Mammary epithelial cell (primary cell): ENCODE measurements at regions of chr3 and their contacts with region 1.

Region 1: DNA sequence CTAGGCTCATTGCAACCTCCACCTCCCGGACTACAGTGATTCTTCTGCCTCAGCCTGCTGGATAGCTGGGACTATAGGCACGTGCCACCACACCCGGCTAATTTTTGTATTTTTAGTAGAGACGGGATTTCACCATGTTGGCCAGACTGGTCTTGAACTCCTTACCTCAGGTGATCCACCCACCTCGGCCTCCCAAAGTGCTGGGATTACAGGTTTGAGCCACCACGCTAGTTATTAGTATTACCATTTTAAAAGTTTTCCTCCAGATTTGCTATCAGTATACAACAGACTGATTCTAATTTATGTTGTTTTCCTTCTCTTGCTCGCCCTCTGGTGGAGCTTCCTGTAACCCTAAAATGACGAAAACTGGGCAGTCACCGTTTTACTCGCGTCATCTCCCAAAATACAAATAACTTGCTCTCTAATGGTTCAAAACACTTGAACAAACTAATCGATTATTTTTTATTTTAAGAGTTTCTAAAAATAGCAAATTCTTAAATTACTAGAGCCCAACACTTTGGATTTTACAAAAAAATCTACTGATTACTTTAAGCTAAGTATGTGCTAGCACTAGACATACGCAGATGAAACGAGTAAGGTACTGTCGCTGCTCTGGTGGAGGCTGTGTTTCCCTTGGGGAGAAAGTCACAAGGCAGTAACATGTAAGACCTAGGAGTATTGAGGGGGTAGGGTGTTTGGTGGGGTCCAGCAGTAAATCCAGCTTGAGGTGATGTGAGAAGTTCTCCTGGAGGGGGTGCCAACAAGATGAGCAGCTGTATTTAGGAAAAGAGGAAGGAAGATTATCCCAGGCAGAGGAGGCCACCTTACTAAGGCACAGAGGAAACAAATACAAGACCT is 203.3 kb downstream of the MBNL1 start:
- DNase-seq: no peak
- H3K4me3 ChIP-seq: peak overlapping the region in 1 of 3 experiments; percentile 22
- H3K27ac ChIP-seq: no peak overlapping the region
- H3K4me1 ChIP-seq: no peaks in the 10 kb centered on the region
- H3K27me3 ChIP-seq: no peaks in the 10 kb centered on the region
- CTCF ChIP-seq: peak; percentile 61 to 68

Region 2: GRCh38 chr3:152026033-152026556 is 445.9 kb before region 1 on chr3:
- CTCF ChIA-PET with region 1: no interaction called
- dilution Hi-C with region 1: no loop called
- in situ Hi-C with region 1: no loop called
- intact Hi-C with region 1: loop called (anchors 1 kb)
- DNase-seq: peak; percentile 66
- H3K4me3 ChIP-seq: peak overlapping the region in 1 of 3 experiments; percentile 33
- H3K27ac ChIP-seq: peak overlapping the region; percentile 67
- H3K4me1 ChIP-seq: peaks cover 36% of the 10 kb centered on the region
- H3K27me3 ChIP-seq: no peaks in the 10 kb centered on the region
- CTCF ChIP-seq: peak; percentile 13 to 20

Region 3: GRCh38 chr3:152258448-152259393 is 213.3 kb before region 1 on chr3:
- CTCF ChIA-PET with region 1: no interaction called
- dilution Hi-C with region 1: no loop called
- in situ Hi-C with region 1: no loop called
- intact Hi-C with region 1: no loop called
- DNase-seq: peak; percentile 98
- H3K4me3 ChIP-seq: no peak overlapping the region
- H3K27ac ChIP-seq: peak overlapping the region; percentile 76
- H3K4me1 ChIP-seq: peaks cover 14% of the 10 kb centered on the region
- H3K27me3 ChIP-seq: no peaks in the 10 kb centered on the region
- CTCF ChIP-seq: no peak

Region 4: DNA sequence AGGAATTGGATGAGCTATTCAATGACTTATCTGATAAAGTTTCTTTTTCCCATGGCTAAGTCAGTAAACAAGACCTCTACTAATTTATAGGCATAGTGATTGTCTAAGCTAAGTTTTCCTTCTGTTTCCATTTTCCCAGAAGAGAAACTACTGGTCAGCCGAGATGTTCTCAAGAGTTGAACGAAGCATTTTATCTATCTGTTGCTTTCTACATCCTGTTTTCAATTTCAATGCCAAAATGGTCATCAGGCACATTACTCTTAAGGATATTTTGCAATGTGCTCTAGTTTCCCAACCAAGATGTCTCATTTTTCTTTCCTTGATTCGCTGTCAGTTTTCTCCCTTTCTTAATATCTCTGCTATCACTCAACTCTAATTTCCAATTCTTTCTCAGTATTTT is 25.4 kb after region 1 on chr3:
- CTCF ChIA-PET with region 1: interaction called, 18 read pairs
- dilution Hi-C with region 1: no loop called
- in situ Hi-C with region 1: no loop called
- intact Hi-C with region 1: no loop called
- DNase-seq: no peak
- H3K4me3 ChIP-seq: no peak overlapping the region
- H3K27ac ChIP-seq: no peak overlapping the region
- H3K4me1 ChIP-seq: no peaks in the 10 kb centered on the region
- H3K27me3 ChIP-seq: no peaks in the 10 kb centered on the region
- CTCF ChIP-seq: no peak

Region 5: GRCh38 chr3:152574461-152575079 is 102.5 kb after region 1 on chr3:
- CTCF ChIA-PET with region 1: no interaction called
- dilution Hi-C with region 1: no loop called
- in situ Hi-C with region 1: no loop called
- intact Hi-C with region 1: loop called (anchors 1 kb)
- DNase-seq: peak; percentile 20
- H3K4me3 ChIP-seq: no peak overlapping the region
- H3K27ac ChIP-seq: no peak overlapping the region
- H3K4me1 ChIP-seq: no peaks in the 10 kb centered on the region
- H3K27me3 ChIP-seq: peaks cover 2% of the 10 kb centered on the region
- CTCF ChIP-seq: peak; percentile 47 to 58

Region 6: DNA sequence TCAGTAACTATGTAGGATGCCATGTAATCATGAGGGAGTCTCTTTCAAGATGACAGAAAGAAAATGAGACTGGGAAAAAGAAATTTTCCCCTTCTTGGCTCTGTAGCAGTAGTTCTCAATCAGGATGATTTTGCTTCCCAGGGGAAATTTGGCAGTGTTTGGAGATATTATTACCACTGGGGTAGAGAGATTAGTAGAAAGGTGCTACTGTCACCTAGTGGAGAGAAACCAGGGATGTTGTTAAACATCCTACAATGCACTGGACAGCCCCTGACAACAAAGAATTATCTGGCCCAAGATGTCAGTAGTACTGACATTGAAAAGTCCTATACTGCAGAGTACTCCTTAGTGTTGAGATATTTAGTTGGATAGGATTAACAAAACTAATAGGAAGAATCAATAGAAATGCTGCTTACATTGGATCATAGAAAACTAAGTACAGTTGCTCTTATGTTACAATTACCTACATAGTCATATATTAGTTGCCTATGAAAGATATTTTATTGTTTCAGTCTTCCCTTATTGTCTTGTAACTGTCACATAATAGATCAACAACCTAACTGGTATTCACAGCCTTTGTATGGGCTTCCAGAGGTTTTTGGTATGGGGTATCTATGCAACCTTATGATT is 1123.3 kb after region 1 on chr3:
- CTCF ChIA-PET with region 1: no interaction called
- dilution Hi-C with region 1: no loop called
- in situ Hi-C with region 1: no loop called
- intact Hi-C with region 1: loop called (anchors 5 kb)
- DNase-seq: peak; percentile 45
- H3K4me3 ChIP-seq: no peak overlapping the region
- H3K27ac ChIP-seq: no peak overlapping the region
- H3K4me1 ChIP-seq: peaks cover 18% of the 10 kb centered on the region
- H3K27me3 ChIP-seq: no peaks in the 10 kb centered on the region
- CTCF ChIP-seq: peak; percentile 78 to 96